Posterior vena cava (tissue), 2 donors: ENCODE measurements at regions of chr9 and their contacts with region 1.

Region 1: GRCh38 chr9:128927731-128928411 is 7.1 kb downstream of the PHYHD1 start:
- DNase-seq: no peak

Region 2: DNA sequence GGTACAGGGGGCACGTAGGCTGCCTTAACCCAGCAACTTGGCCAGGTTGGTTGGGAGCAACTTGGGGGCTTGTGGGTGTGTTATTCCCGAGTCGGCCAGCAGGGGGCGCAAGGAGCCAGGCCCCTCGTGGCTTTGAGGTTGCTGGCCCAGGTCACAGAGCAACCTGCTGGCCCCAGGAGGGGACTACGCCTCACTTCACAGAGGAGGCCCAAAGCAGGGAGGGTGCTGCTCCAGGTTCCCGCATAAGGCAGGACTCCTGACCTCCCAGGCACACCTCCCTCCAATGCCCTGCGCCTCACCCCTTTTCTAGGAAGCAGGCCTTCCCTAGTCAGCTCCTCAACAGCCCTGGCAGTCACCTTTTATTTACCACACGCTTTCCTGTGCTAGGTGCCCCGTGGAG is 64.2 kb before region 1 on chr9:
- intact Hi-C with region 1: loop called (anchors 2 to 5 kb)
- DNase-seq: peak; percentile 92